HepG2 (cell line): ENCODE measurements at regions of chr13 and their contacts with region 1.

Region 1: GRCh38 chr13:55418095-55418494 is 1722.6 kb upstream of the PRR20A start:
- DNase-seq: no peak
- ATAC-seq: no peak
- H3K4me3 ChIP-seq: no peak overlapping the region
- H3K27ac ChIP-seq: no peak overlapping the region
- H3K4me1 ChIP-seq: no peaks in the 10 kb centered on the region
- H3K27me3 ChIP-seq: no peaks in the 10 kb centered on the region
- CTCF ChIP-seq: no peak
- EP300 ChIP-seq: no peak
- POLR2A ChIP-seq: no peak
- RAD21 ChIP-seq: no peak

Region 2: DNA sequence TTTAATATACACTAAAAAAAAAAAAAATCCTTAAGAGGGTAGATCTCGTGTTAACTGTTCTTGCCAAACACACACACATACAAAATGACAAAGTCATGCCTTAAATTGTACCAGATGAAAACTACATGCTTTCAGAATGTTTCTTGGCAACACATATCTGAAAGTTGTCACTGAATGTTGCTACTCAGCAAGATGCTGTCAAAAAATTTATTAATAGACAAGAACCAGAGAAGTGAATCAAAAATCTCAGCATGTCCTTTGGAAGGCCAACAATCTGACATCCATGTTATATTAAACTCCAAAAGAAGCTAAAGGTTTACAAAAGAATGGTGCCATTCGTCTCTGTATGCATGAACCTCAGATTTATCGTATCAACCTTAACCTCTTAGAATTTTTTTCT is 23.6 kb before region 1 on chr13:
- CTCF ChIA-PET with region 1: no interaction called
- POLR2A ChIA-PET with region 1: no interaction called
- in situ Hi-C with region 1: no loop called
- intact Hi-C with region 1: loop called (anchors 1 kb)
- DNase-seq: no peak
- ATAC-seq: no peak
- H3K4me3 ChIP-seq: no peak overlapping the region
- H3K27ac ChIP-seq: no peak overlapping the region
- H3K4me1 ChIP-seq: no peaks in the 10 kb centered on the region
- H3K27me3 ChIP-seq: no peaks in the 10 kb centered on the region
- CTCF ChIP-seq: no peak
- EP300 ChIP-seq: no peak
- POLR2A ChIP-seq: no peak
- RAD21 ChIP-seq: no peak